Endothelial cell of umbilical vein (primary cell): ENCODE measurements at regions of chrX and their contacts with region 1.

Region 1: DNA sequence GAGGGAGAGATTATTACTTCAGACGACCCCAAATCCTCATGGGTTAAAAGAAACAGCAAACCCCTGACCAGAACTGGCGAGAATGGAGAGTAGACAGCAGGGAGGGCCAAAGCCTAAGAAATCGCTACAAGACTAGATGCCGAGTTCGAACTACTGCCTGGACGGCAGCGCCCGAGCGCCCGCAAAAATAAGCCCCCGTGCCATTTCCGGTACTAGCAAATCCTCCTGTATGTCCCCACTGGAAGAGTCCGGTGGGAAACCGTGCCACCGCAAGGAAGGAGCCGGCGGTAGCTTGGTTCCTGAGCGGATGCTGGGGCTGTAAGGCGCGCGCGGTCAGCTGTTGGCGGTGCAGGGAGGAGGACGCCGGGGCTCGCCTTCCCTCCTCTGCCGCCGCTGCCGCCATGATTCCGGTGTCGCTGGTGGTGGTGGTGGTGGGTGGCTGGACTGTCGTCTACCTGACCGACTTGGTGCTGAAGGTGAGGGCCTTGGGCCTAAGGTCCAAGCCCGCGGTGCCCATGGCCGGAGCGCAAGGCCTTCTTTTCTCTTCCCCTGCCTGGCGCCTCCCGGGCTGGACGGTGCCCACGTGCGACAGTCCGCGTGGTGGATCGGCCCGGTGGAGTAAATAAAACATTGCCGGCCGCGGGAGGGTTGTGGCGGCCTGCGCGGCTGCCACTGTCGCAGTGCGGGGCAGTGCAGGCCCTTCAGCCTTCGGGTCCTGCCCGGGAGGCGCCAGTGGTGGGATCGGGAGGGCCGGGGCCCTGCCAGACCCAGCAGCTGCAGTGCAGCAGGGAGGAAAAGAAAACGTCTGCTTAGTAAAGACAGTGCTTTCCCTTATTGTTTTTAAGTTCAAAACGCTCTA is at the start of gene MBTPS2:
- DNase-seq: peak; percentile 90
- H3K4me3 ChIP-seq: peak within 1 kb of the TSS; percentile 44 to 81 (median 62)
- H3K27ac ChIP-seq: peak within 1 kb of the TSS; percentile 86
- H3K4me1 ChIP-seq: no peaks in the 10 kb centered on the region
- H3K27me3 ChIP-seq: no peaks in the 10 kb centered on the region
- CTCF ChIP-seq: peak in 1 of 2 donors; percentile 15
- POLR2A ChIP-seq: peak; percentile 80
- total RNA-seq, gene MBTPS2: 14.5 and 16.4 TPM in 2 replicates

Region 2: DNA sequence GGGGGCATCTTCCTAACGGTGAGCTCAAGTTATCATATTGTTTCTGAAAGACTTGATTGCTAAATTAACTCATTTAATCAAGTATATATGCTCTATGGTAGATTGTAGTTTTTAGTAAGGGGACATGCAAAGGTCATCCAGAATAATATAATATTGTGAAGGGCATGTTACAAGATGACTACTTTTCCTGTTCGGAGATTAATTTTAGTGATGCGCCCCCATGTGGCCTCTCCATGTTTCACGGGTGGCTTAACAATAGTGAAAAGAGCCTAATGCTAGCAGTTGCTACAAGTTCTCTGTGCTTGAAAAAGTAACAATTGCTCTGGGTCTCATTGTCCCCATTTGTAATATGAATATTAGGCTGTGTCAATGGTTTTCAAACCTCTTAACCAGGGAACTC is 93.8 kb before region 1 on chrX:
- CTCF ChIA-PET with region 1: no interaction called
- POLR2A ChIA-PET with region 1: no interaction called
- dilution Hi-C with region 1: no loop called
- intact Hi-C with region 1: loop called (anchors 5 kb)
- DNase-seq: peak; percentile 24
- H3K4me3 ChIP-seq: no peak overlapping the region
- H3K27ac ChIP-seq: no peak overlapping the region
- H3K4me1 ChIP-seq: peaks cover 6% of the 10 kb centered on the region
- H3K27me3 ChIP-seq: peaks cover 0 to 9% of the 10 kb centered on the region in 2 experiments
- CTCF ChIP-seq: peak; percentile 31 to 36
- POLR2A ChIP-seq: no peak

Region 3: DNA sequence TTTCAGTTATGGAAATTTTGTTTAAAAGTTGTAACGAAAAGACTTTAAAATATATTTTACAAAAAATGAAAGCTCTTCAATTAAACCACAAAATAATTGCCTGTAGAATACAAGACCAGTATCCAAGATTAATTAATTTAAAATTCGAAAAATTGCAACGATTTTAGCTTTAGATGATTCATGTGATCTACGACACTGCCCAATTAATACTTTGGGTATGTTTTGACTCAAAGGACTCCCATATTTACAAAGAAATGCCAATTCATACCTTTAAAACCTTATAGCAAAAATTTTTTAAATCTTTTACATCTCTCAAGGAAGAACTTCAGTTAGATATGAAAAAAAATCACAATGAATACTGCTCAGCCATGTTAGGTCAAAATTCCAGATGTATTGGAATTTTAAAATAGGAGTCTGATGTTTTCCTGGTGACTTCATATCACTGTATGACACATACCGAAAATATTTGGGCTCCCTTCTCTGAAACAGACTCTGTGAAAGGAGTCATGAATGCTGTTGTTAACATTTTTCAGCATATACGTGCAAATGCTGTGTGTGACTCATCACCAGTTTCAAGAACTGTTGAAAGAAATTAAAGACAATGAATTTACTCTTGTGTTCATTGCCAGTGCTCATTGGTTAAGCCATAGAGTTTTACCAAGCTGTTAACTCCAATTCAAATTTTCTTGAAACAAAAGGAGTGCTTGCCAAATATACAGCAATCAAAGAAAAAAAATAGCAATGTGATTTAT is 87.1 kb after region 1 on chrX:
- CTCF ChIA-PET with region 1: no interaction called
- POLR2A ChIA-PET with region 1: no interaction called
- dilution Hi-C with region 1: no loop called
- intact Hi-C with region 1: loop called (anchors 1 kb)
- DNase-seq: peak; percentile 93
- H3K4me3 ChIP-seq: peak overlapping the region in 2 of 3 experiments; percentile 13 to 45
- H3K27ac ChIP-seq: peak overlapping the region; percentile 94
- H3K4me1 ChIP-seq: peaks cover 25% of the 10 kb centered on the region
- H3K27me3 ChIP-seq: no peaks in the 10 kb centered on the region
- CTCF ChIP-seq: no peak
- POLR2A ChIP-seq: no peak

Region 4: GRCh38 chrX:21946925-21947641 is 107.5 kb after region 1 on chrX:
- CTCF ChIA-PET with region 1: no interaction called
- POLR2A ChIA-PET with region 1: no interaction called
- dilution Hi-C with region 1: no loop called
- intact Hi-C with region 1: loop called (anchors 2 kb)
- DNase-seq: peak; percentile 83
- H3K4me3 ChIP-seq: peak overlapping the region in 1 of 3 experiments; percentile 32
- H3K27ac ChIP-seq: peak overlapping the region; percentile 97
- H3K4me1 ChIP-seq: peaks cover 57% of the 10 kb centered on the region
- H3K27me3 ChIP-seq: no peaks in the 10 kb centered on the region
- CTCF ChIP-seq: no peak
- POLR2A ChIP-seq: no peak

Region 5: GRCh38 chrX:22192417-22193060 is 353.0 kb after region 1 on chrX:
- CTCF ChIA-PET with region 1: no interaction called
- POLR2A ChIA-PET with region 1: no interaction called
- dilution Hi-C with region 1: no loop called
- intact Hi-C with region 1: loop called (anchors 1 kb)
- DNase-seq: peak; percentile 46
- H3K4me3 ChIP-seq: no peak overlapping the region
- H3K27ac ChIP-seq: no peak overlapping the region
- H3K4me1 ChIP-seq: no peaks in the 10 kb centered on the region
- H3K27me3 ChIP-seq: no peaks in the 10 kb centered on the region
- CTCF ChIP-seq: peak; percentile 56
- POLR2A ChIP-seq: no peak

Region 6: GRCh38 chrX:22616867-22617266 is 777.3 kb after region 1 on chrX:
- CTCF ChIA-PET with region 1: no interaction called
- POLR2A ChIA-PET with region 1: no interaction called
- dilution Hi-C with region 1: no loop called
- intact Hi-C with region 1: loop called (anchors 5 kb)
- DNase-seq: no peak
- H3K4me3 ChIP-seq: no peak overlapping the region
- H3K27ac ChIP-seq: no peak overlapping the region
- H3K4me1 ChIP-seq: no peaks in the 10 kb centered on the region
- H3K27me3 ChIP-seq: no peaks in the 10 kb centered on the region
- CTCF ChIP-seq: no peak
- POLR2A ChIP-seq: no peak